ENCODE measurements at regions of chrX and their contacts with region 1.

Region 1: GRCh38 chrX:73855546-73855945 is 292.5 kb downstream of the CHIC1 start:
- DNase-seq: peak; percentile 70
- ATAC-seq: peak; percentile 22
- H3K4me3 ChIP-seq: no peak overlapping the region
- H3K27ac ChIP-seq: no peak overlapping the region
- H3K4me1 ChIP-seq: no peaks in the 10 kb centered on the region
- H3K27me3 ChIP-seq: peaks cover under 1% of the 10 kb centered on the region; the same call in 1 of the 2 replicates
- CTCF ChIP-seq: peak; percentile 92
- POLR2A ChIP-seq: no peak
- RAD21 ChIP-seq: peak; percentile 93

Region 2: GRCh38 chrX:73076838-73077237 is 778.7 kb before region 1 on chrX:
- CTCF ChIA-PET with region 1: no interaction called
- POLR2A ChIA-PET with region 1: no interaction called
- dilution Hi-C with region 1: no loop called
- in situ Hi-C with region 1: no loop called
- intact Hi-C with region 1: loop called (anchors 10 kb)
- DNase-seq: no peak
- ATAC-seq: no peak
- H3K4me3 ChIP-seq: no peak overlapping the region
- H3K27ac ChIP-seq: no peak overlapping the region
- H3K4me1 ChIP-seq: no peaks in the 10 kb centered on the region
- H3K27me3 ChIP-seq: no peaks in the 10 kb centered on the region
- CTCF ChIP-seq: no peak
- POLR2A ChIP-seq: no peak
- RAD21 ChIP-seq: no peak

Region 3: GRCh38 chrX:74015379-74016019 is 160.0 kb after region 1 on chrX:
- CTCF ChIA-PET with region 1: interaction called, 3 read pairs
- POLR2A ChIA-PET with region 1: no interaction called
- dilution Hi-C with region 1: no loop called
- in situ Hi-C with region 1: loop called (anchors 5 kb)
- intact Hi-C with region 1: loop called (anchors 1 kb)
- DNase-seq: peak; percentile 77
- ATAC-seq: peak; percentile 90
- H3K4me3 ChIP-seq: no peak overlapping the region
- H3K27ac ChIP-seq: no peak overlapping the region
- H3K4me1 ChIP-seq: no peaks in the 10 kb centered on the region
- H3K27me3 ChIP-seq: no peaks in the 10 kb centered on the region
- CTCF ChIP-seq: peak; percentile 97
- POLR2A ChIP-seq: 0 out of 2 replicates have a peak, but pooled peaks have one; percentile 27
- RAD21 ChIP-seq: peak; percentile 98

Region 4: DNA sequence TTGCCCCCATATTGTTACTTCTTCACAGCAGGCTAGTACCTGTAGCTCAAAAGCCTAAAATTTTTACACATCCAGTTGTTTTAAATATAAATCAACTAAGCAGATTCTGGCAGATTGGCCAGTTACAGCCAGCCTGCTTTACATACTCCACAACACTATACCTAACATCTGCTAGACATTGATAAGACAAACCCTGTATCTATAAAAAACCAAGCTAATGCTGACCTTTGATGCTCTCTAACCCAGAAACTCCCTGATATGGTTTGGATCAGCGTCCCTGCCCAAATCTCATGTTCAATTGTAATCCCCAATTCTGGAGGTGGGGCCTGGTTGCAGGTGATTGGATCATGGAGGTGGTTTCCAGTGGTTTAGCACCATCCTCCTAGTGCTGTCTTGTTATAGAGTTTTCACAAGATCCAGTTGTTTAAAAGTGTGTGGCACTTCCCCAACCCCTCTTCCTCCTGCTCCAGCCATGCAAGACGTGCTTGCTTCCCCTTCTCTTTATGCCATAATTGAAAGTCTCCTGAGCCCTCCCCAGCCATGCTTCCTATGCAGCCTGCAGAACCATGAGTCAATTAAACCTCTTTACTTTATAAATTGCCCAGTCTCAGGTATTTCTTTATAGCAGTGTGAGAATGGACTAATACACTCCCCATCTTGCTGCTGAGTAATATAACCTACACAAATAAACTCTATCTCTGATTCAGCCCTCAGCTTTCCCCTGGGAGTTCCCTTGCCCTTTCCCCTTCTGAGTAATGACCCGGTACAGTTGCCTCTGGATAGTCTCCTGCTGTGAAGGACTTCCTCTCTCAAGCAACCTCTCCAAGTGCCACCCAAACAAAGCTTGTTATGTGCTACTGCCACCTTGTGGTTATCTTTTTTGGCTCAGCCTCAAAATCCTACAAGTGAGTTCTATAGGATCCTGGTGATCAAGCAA is 488.1 kb after region 1 on chrX:
- CTCF ChIA-PET with region 1: no interaction called
- POLR2A ChIA-PET with region 1: no interaction called
- dilution Hi-C with region 1: no loop called
- in situ Hi-C with region 1: no loop called
- intact Hi-C with region 1: loop called (anchors 1 kb)
- DNase-seq: peak; percentile 97
- ATAC-seq: peak; percentile 99
- H3K4me3 ChIP-seq: no peak overlapping the region
- H3K27ac ChIP-seq: no peak overlapping the region
- H3K4me1 ChIP-seq: 0 out of 2 replicates have a peak, but pooled peaks cover 2% of the 10 kb centered on the region
- H3K27me3 ChIP-seq: no peaks in the 10 kb centered on the region
- CTCF ChIP-seq: peak; percentile 67
- POLR2A ChIP-seq: no peak
- RAD21 ChIP-seq: peak; percentile 70

Region 5: GRCh38 chrX:74550295-74550802 is 694.8 kb after region 1 on chrX:
- CTCF ChIA-PET with region 1: no interaction called
- POLR2A ChIA-PET with region 1: no interaction called
- dilution Hi-C with region 1: no loop called
- in situ Hi-C with region 1: no loop called
- intact Hi-C with region 1: loop called (anchors 1 kb)
- DNase-seq: peak; percentile 67
- ATAC-seq: peak; percentile 97
- H3K4me3 ChIP-seq: peak overlapping the region; percentile 38; the same call in 1 of the 2 replicates
- H3K27ac ChIP-seq: no peak overlapping the region
- H3K4me1 ChIP-seq: no peaks in the 10 kb centered on the region
- H3K27me3 ChIP-seq: no peaks in the 10 kb centered on the region; the same call in 1 of the 2 replicates
- CTCF ChIP-seq: peak; percentile 99
- POLR2A ChIP-seq: no peak
- RAD21 ChIP-seq: peak; percentile 95

Measured in IMR-90 (cell line).